Activated CD4-positive, alpha-beta T cell treated with anti-CD3 and anti-CD28 coated beads for 36 hours (primary cell): ENCODE measurements at regions of chr3 and their contacts with region 1.

Region 1: DNA sequence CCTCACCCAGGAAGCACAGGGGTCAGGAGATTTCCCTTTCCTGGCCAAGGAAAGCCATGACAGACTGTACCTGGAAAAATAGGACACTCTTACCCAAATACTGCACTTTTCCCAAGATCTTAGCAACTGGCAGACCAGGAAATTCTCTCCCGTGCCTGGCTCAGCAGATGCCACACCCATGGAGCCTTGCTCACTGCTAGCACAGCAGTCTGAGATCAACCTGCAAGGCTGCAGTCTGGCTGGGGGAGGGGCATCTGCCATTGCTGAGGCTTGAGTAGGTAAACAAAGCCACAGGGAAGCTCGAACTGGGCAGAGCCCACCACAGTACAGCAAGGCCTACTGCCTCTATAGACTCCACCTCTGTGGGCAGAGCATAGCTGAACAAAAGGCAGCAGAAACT is 567.3 kb upstream of the LMCD1 start:
- DNase-seq: no peak
- ATAC-seq: no peak
- H3K4me3 Mint-ChIP-seq: no peak overlapping the region
- H3K27ac Mint-ChIP-seq: no peak overlapping the region
- H3K4me1 Mint-ChIP-seq: peaks cover 10% of the 10 kb centered on the region
- H3K27me3 Mint-ChIP-seq: peaks cover 3% of the 10 kb centered on the region

Region 2: GRCh38 chr3:7787871-7788828 is 146.2 kb before region 1 on chr3:
- CTCF ChIA-PET with region 1: no interaction called
- POLR2A ChIA-PET with region 1: no interaction called
- intact Hi-C with region 1: no loop called
- DNase-seq: no peak
- ATAC-seq: no peak
- H3K4me3 Mint-ChIP-seq: no peak overlapping the region
- H3K27ac Mint-ChIP-seq: no peak overlapping the region
- H3K4me1 Mint-ChIP-seq: no peaks in the 10 kb centered on the region
- H3K27me3 Mint-ChIP-seq: no peaks in the 10 kb centered on the region

Region 3: DNA sequence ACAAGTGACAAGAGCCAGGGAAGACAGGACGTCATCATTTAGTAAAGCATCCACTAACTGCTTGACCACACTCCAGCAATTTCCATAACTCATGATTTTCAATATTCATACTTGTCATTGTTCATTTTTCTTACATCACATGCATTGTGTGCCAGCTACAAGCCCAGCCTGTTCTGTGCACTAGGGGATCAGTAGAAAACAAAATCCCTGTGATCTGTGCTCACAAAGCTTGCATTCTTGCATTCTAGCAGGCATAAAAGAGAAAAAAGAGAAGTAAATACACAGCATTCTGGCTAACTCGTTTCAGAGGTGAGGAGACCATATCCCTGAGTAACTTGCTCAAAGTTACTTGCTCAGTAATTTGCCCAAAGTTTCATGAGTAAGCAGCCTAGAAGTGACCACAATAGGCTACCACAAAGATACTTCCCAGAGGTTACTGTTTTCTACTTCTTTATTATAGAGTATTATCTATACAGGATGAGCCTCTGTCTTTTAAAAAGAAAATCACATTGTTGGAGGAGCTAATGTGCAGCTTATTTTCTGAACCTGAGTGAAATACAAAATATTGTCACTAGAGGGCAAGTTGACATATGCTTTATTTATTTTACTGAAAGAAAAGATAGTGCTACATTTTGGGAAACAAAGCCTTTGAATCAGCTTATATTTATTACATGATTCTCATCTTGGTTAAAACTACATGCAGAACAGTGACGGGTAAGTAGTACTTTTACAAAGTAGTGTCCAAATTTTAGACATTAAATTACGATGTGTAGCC is 134.2 kb before region 1 on chr3:
- CTCF ChIA-PET with region 1: no interaction called
- POLR2A ChIA-PET with region 1: no interaction called
- intact Hi-C with region 1: no loop called
- DNase-seq: no peak
- ATAC-seq: no peak
- H3K4me3 Mint-ChIP-seq: no peak overlapping the region
- H3K27ac Mint-ChIP-seq: no peak overlapping the region
- H3K4me1 Mint-ChIP-seq: no peaks in the 10 kb centered on the region
- H3K27me3 Mint-ChIP-seq: no peaks in the 10 kb centered on the region

Region 4: GRCh38 chr3:7897655-7898054 is 36.7 kb before region 1 on chr3:
- CTCF ChIA-PET with region 1: no interaction called
- POLR2A ChIA-PET with region 1: no interaction called
- intact Hi-C with region 1: loop called in 1 of 2 experiments (anchors 1 kb)
- DNase-seq: no peak
- ATAC-seq: no peak
- H3K4me3 Mint-ChIP-seq: no peak overlapping the region
- H3K27ac Mint-ChIP-seq: no peak overlapping the region
- H3K4me1 Mint-ChIP-seq: peaks cover 5% of the 10 kb centered on the region
- H3K27me3 Mint-ChIP-seq: no peaks in the 10 kb centered on the region

Region 5: GRCh38 chr3:7999384-7999783 is 65.0 kb after region 1 on chr3:
- CTCF ChIA-PET with region 1: no interaction called
- POLR2A ChIA-PET with region 1: no interaction called
- intact Hi-C with region 1: no loop called
- DNase-seq: no peak
- ATAC-seq: no peak
- H3K4me3 Mint-ChIP-seq: no peak overlapping the region
- H3K27ac Mint-ChIP-seq: no peak overlapping the region
- H3K4me1 Mint-ChIP-seq: no peaks in the 10 kb centered on the region
- H3K27me3 Mint-ChIP-seq: no peaks in the 10 kb centered on the region

Region 6: GRCh38 chr3:8278448-8278847 is 344.1 kb after region 1 on chr3:
- CTCF ChIA-PET with region 1: no interaction called
- POLR2A ChIA-PET with region 1: no interaction called
- intact Hi-C with region 1: no loop called
- DNase-seq: no peak
- ATAC-seq: no peak
- H3K4me3 Mint-ChIP-seq: no peak overlapping the region
- H3K27ac Mint-ChIP-seq: no peak overlapping the region
- H3K4me1 Mint-ChIP-seq: no peaks in the 10 kb centered on the region
- H3K27me3 Mint-ChIP-seq: no peaks in the 10 kb centered on the region